ENCODE measurements at regions of chr12 and their contacts with region 1.

Region 1: DNA sequence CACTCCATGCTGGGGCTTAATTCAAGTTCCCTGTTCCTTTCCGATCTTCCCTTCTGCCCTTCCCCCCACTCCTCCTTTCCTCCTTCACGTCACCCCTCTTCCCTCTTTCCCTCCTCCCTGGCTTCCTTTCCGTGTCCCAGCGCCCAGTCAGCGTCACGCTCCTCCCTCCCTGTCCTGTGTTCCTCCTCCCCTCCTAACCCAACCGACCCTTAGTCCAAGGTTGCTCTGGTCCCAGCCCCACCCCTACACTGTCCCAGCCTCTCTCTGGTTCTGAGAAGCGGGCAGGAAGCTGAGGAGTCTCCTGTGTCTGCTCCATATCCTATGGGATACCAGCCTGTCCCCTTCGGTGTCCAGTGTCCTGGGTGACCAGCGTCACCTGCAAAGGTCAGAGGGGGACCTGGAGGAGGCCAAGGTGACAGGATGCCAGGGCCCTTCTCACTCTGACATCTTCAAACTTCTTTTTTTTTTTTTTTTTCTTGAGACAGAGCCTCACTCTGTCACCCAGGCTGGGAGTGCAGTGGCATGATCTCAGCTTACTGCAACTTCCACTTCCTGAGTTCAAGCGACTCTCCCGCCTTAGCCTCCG is 56.2 kb upstream of the TSPAN9 start:
- DNase-seq: no peak
- H3K4me3 ChIP-seq: no peak overlapping the region
- H3K27ac ChIP-seq: no peak overlapping the region
- H3K4me1 ChIP-seq: no peaks in the 10 kb centered on the region
- H3K27me3 ChIP-seq: no peaks in the 10 kb centered on the region
- CTCF ChIP-seq: no peak
- EP300 ChIP-seq: no peak
- RAD21 ChIP-seq: no peak

Region 2: GRCh38 chr12:2992724-2993123 is 28.2 kb before region 1 on chr12:
- CTCF ChIA-PET with region 1: no interaction called
- POLR2A ChIA-PET with region 1: no interaction called
- DNase-seq: no peak
- H3K4me3 ChIP-seq: no peak overlapping the region
- H3K27ac ChIP-seq: no peak overlapping the region
- H3K4me1 ChIP-seq: no peaks in the 10 kb centered on the region
- H3K27me3 ChIP-seq: no peaks in the 10 kb centered on the region
- CTCF ChIP-seq: no peak
- EP300 ChIP-seq: no peak
- RAD21 ChIP-seq: no peak

Region 3: DNA sequence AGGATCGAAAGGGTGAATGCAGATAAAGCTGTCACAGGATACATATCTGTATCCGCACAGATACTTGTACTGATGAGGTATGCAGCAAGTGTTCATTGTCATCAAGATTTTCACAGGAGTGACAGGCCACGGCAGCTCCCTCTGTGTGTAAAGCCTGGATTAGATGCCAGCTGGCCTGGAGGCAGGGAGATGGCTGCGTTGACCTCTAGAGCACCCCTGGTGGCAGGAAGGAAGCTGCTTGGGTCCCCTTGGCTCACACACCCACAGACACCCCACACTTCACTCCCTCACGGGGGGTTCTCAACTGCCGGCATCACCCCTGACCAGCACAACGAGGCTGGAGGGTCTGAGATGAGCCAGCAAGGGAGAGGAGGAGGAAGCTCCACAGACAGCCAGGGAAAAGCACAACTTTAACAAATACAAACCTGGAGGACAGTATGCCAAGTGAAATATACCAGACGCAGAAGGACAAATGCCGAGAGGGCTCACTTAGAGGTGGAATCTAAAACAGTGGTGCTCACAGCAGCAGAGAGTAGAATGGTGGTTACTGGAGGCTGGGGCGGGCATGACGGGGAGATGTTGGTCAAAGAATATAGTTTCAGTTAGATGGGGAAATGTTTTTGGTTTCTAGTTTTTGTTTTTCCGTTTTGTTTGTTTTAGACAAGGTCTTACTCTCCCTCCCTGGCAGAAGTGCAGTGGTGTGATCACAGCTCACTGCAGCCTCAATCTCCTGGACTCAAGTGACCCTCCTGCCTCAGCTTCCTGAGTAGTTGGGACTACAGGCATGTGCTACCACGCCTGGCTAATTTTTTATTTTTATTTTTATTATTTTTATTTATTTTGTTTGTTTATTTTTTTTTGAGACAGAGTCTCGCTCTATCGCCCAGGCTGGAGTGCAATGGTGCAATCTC is 16.0 kb before region 1 on chr12:
- CTCF ChIA-PET with region 1: interaction called, 12 read pairs
- POLR2A ChIA-PET with region 1: no interaction called
- DNase-seq: peak; percentile 85
- H3K4me3 ChIP-seq: no peak overlapping the region
- H3K27ac ChIP-seq: peak overlapping the region in 1 of 2 experiments; percentile 48; a peak in 2 of 4 replicates
- H3K4me1 ChIP-seq: peaks cover 0 to 20% of the 10 kb centered on the region in 2 experiments; a peak in 1 of 4 replicates
- H3K27me3 ChIP-seq: no peaks in the 10 kb centered on the region
- CTCF ChIP-seq: peak; percentile 50
- EP300 ChIP-seq: no peak
- RAD21 ChIP-seq: peak; percentile 33; the same call in 1 of the 2 replicates